ENCODE measurements at regions of chr12 and their contacts with region 1.

Region 1: DNA sequence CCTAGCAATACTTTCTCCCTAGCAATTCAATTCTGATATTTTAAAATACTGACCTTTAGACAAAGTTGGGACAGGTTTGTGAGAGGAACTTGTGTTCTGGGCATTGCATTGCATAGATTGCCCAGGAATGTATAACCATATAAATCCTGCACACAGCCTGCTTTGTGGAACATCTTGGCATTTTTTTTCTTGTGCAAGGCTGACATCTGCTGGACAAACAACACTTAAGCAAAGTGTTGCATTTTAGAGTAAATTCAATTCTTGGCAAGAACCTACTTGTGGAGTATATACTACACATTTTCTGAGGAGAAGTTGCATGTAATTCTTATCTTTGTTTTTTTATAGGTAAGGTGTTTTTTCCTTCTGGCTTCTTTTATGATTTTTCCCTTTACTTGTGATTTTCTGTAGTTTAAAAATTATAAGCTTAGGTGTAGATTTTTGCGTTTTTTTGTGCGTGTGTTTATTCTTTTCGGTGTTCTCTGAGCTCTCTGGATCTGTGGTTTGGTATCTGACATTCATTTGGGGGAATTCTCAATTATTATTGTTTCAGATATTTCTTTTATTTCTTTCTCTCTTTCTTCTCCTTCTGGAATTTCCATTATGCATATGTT is 26.4 kb downstream of the TESPA1 start:
- DNase-seq: peak in 3 of 6 donors; percentile 24 to 62 (median 24)
- ATAC-seq: peak in 3 of 4 donors; percentile 83 to 85 (median 84)
- H3K4me3 ChIP-seq: no peak overlapping the region
- H3K27ac ChIP-seq: no peak overlapping the region
- H3K4me1 ChIP-seq: no peaks in the 10 kb centered on the region
- H3K27me3 ChIP-seq: peaks cover 0 to 5% (median 0%) of the 10 kb centered on the region in 4 donors
- CTCF ChIP-seq: peak in 3 of 4 donors; percentile 33 to 63 (median 42)

Region 2: DNA sequence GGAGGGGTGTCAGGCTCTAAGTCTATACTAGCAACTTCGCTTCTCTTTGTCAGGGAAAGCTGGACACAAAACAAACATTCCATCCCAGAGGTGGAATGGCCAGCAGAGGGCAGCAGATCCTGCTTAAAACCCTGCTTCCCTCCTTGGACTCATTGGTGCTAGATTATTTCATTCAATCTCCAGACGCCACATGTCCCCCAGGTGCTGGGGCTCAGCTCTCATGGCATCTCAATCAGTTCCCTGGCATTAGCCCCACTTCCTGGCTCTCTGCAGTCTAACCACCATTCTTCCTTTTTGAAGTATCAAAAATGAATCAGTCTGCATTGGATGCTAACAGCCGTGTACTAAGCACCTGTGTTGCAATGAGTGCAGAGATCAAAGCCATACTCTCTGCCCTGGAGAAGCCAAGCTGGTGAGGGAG is 361.6 kb before region 1 on chr12:
- intact Hi-C with region 1: loop called in 1 of 3 experiments (anchors 10 kb)
- DNase-seq: peak in 5 of 6 donors; percentile 43 to 86 (median 69)
- ATAC-seq: peak; percentile 78 to 93 (median 84)
- H3K4me3 ChIP-seq: no peak overlapping the region
- H3K27ac ChIP-seq: no peak overlapping the region
- H3K4me1 ChIP-seq: no peaks in the 10 kb centered on the region
- H3K27me3 ChIP-seq: no peaks in the 10 kb centered on the region
- CTCF ChIP-seq: peak; percentile 70 to 84 (median 80)

Region 3: GRCh38 chr12:54701940-54702592 is 256.1 kb before region 1 on chr12:
- intact Hi-C with region 1: loop called in 1 of 3 experiments (anchors 5 kb)
- DNase-seq: no peak
- ATAC-seq: peak in 3 of 4 donors; percentile 66 to 86 (median 75)
- H3K4me3 ChIP-seq: no peak overlapping the region
- H3K27ac ChIP-seq: no peak overlapping the region
- H3K4me1 ChIP-seq: no peaks in the 10 kb centered on the region
- H3K27me3 ChIP-seq: no peaks in the 10 kb centered on the region
- CTCF ChIP-seq: peak in 3 of 4 donors; percentile 50 to 53 (median 52)

Region 4: GRCh38 chr12:54749191-54749818 is 208.8 kb before region 1 on chr12:
- intact Hi-C with region 1: loop called in 2 of 3 experiments (anchors 5 to 10 kb)
- DNase-seq: peak in 1 of 6 donors; percentile 13
- ATAC-seq: peak in 3 of 4 donors; percentile 70 to 79 (median 76)
- H3K4me3 ChIP-seq: no peak overlapping the region
- H3K27ac ChIP-seq: no peak overlapping the region
- H3K4me1 ChIP-seq: no peaks in the 10 kb centered on the region
- H3K27me3 ChIP-seq: peaks cover 0 to 4% (median 0%) of the 10 kb centered on the region in 4 donors
- CTCF ChIP-seq: peak; percentile 43 to 74 (median 56)

Region 5: DNA sequence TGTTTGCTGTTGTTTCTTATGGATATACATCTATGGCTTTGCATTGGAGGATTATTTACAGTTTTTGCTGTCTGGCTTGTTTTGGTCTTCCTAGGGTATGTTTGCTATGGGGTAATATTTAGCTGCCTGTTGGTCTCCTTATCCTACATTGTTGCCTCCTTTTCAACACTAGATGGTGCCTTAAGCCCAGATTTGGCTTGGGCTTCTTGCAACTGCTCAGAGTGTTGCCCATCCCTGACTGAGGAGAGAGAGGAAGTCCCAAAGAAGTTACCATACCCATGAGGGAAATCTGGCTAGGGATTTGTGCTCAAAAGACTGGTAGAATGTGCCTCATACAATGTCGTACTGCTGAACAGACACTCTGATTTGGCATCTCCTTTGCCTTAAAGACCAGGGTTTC is 198.4 kb before region 1 on chr12:
- intact Hi-C with region 1: loop called in 1 of 3 experiments (anchors 10 kb)
- DNase-seq: no peak
- ATAC-seq: no peak
- H3K4me3 ChIP-seq: no peak overlapping the region
- H3K27ac ChIP-seq: no peak overlapping the region
- H3K4me1 ChIP-seq: no peaks in the 10 kb centered on the region
- H3K27me3 ChIP-seq: peaks cover 0 to 3% (median 0%) of the 10 kb centered on the region in 4 donors
- CTCF ChIP-seq: no peak

Region 6: GRCh38 chr12:55019779-55020178 is 61.6 kb after region 1 on chr12 and contains the start of gene NEUROD4:
- intact Hi-C with region 1: no loop called
- DNase-seq: peak; percentile 47 to 72 (median 54)
- ATAC-seq: peak; percentile 89 to 100 (median 94)
- H3K4me3 ChIP-seq: no peak within 1 kb of the TSS
- H3K27ac ChIP-seq: no peak within 1 kb of the TSS
- H3K4me1 ChIP-seq: no peaks in the 10 kb centered on the region
- H3K27me3 ChIP-seq: peaks cover 0 to 15% (median 4%) of the 10 kb centered on the region in 4 donors
- CTCF ChIP-seq: no peak
- total RNA-seq, gene NEUROD4: not detected